Left cardiac atrium (tissue), 4 donors: ENCODE measurements at regions of chr14 and their contacts with region 1.

Region 1: DNA sequence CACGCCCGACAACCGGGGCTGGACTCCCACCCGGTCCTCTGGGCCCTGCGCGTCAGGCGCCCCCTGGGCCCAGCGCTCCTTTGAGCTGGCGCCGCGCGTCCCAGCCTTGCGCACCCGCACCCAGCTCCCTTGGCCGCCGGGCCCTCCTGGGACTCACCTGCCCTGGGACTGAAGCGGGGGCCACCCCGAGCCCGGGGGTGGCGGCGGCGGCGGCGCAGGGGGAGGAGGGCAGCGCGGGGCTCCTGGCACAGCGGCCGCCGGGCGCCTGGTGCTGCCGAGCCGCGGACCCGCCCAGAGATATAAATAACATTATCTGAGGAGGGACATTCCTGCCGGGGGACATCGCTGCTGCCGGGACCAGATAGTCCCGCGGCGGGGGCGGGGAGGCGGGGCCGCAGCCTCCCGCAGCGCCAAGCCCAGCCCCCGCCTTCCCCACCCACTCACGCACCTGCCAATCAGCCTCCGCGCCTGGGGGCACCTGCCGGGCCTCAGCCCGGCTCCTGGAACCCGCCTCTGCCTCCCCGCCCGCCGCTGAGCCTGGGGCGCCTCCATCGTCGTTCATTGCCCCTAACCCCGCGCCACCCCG is at the start of gene SPTB:
- DNase-seq: peak; percentile 74
- ATAC-seq: peak; percentile 91 to 95
- total RNA-seq, gene SPTB: 58.2 to 63.6 TPM

Region 2: DNA sequence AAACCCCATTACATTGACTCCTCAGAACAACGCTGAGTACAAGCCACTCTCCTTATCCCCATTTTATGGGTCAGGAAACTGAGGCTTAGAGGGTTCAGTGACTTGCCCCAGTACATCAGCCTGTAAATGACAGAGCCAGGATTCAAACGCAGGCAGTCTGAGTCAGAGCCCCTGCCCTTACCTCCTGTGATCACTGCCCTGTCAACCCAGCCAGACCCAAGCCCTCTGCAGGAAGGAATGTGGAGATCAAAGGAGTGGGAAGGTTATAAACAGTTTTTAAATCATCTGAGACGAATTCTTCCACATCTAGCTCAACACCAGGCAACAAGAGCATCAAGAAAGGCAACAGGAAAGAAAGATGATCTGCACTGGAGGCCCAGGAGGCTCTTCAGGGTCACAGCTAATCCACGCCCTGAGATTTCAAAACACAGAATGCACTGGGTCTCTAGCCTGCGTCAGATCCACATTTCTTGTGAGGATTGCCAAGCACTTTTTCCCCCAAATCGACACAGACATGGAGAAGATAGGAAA is 38.5 kb before region 1 on chr14:
- intact Hi-C with region 1: loop called in 1 of 2 experiments (anchors 1 kb)
- DNase-seq: no peak
- ATAC-seq: peak; percentile 62 to 89